ENCODE measurements at regions of chr3 and their contacts with region 1.

Region 1: GRCh38 chr3:113852506-113852905 is 13.9 kb downstream of the GRAMD1C start:
- DNase-seq: no peak

Region 2: DNA sequence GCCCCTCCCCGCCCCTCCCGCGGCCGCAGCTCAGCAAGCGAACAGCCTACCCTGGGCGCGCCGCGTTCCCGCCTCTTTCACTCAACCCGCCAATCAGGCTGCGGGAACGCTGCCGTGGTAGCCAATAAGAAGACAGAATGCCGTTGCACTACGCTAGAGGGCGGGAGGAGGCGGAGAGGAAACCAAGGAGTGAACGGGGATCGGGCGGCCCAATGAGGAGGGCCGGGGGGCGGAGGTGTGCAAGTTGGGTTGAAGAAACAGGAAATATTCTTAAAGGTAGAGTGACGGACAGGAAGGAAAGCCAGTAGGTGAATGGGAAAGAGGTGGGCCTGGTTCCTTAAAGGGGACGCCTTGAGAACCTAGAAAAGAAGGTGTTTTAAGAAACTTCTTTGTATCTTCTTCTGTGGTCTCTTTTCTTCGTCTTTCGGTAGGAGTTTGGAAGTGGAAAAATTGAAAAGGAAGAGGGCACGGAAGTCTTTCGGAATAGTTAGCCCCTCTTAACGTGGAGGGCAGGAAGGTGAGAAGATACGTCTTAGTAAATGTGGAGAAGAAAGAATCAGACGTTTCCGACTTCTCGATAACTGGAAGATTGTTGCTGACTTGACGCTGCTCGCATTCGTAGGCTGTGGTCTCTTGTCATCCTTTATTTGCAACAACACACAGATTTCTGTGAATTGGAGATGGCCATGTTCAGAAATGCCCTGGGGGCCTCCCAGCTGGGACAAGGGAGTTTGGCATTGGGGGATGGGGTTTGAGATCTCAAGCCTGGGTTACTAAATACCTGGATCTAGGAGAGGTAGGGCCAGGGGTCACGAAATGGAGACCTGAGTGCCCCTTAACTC is 155.6 kb before region 1 on chr3:
- intact Hi-C with region 1: no loop called
- DNase-seq: peak; percentile 100

Region 3: DNA sequence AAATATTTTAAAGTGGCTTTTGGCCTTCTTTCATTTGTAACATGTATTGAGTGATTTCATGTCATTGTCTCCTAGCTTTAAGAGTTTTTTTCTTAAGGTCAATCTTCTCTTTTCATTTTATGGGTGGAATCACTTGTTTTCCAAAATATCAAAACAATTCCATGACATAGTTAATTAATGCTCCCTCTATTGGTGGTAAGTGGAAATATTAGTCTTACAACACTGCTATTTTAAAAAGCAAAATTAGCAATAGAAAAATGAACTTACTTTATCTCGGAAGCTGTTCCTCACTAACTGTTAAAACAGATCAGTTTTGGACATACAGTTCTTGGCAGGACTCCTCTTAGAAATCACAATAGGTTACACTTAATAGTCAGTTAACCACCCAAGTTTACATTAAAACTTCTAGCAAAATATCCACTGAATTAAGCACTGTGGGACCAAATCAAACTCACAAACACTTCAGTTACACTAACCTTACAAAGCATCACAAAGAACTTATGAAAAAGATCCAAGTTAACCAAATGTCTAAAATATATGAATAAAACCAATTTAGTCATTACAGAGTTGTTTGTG is 483.7 kb after region 1 on chr3:
- intact Hi-C with region 1: loop called in 1 of 2 experiments (anchors 10 kb)
- DNase-seq: no peak